ENCODE measurements at regions of chr12 and their contacts with region 1.

Region 1: DNA sequence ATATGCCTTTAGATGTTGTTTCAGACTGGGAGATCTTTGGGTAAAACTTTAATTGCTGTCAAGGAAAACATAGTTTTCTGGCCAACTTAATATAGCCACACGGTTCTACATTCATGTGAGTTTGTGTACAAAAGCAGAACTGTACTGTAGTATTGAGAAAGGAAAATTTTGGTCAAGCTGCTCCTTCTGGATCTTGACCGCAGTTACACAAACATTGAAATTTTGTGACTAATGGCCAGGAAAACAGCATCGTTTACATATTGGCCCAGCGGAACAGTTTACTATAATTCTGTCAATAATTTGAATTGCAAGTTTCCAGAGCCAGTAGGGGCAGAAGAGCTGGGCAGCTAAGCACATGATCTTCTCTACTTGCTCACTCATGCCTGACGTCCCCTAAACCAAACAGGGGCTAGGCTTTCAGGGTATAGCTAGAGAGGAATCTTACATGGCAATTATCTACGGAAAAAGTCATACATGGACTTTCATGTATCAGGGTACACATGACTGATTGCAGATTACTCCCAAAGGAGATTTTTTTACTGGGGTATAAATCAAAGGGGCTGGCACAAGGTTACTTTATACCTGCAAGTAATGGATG is 11.4 kb upstream of the ART4 start:
- DNase-seq: no peak
- ATAC-seq: peak; percentile 55

Region 2: GRCh38 chr12:14885718-14886221 is 31.1 kb after region 1 on chr12 and contains the start of gene MGP:
- intact Hi-C with region 1: loop called (anchors 5 kb)
- DNase-seq: peak; percentile 59
- ATAC-seq: peak; percentile 90
- total RNA-seq, gene MGP: 231 TPM